Endothelial cell of umbilical vein (primary cell): ENCODE measurements at regions of chr11 and their contacts with region 1.

Region 1: DNA sequence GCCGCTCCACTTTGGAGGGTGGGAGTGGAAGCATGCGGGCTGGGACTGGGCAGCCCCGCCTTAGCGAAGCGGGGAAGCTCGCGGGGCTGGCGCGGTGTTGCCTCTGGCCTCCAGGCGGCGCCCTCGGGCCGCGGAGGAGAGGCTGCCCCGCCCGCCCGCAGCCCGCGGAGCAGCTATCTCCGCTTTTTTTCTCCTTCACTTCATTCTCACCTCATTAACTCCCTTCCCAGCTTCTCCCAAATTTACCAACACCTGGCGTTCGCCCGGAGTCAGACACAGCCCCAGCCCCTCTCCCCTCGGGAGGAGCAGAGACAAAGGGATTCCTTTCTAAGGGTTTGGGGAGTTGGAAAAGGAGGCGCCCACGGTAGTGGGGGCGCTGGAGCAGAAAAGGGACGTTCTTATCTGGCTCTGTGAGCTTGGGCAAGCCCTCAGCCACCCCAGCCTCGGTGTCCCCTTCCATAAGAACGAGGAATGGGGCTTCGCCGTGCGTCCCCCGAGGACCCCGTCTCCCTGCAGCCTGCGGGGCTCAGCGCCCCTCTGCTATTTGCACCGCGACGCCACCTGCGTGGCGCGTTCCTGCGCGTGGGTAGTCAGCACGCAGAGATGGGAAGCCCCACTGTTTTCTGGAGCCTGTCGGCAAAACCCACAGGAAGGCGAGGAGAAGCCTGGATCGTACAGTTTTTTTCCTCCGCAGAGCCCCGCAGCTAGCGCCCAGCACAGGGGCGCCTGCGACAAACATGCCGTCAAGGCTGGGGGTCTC is 1.5 kb upstream of the WNT11 start:
- DNase-seq: peak; percentile 70
- H3K4me3 ChIP-seq: peak overlapping the region in 2 of 3 experiments; percentile 21 to 41
- H3K27ac ChIP-seq: no peak overlapping the region
- H3K4me1 ChIP-seq: peaks cover 18% of the 10 kb centered on the region
- H3K27me3 ChIP-seq: peaks cover 55 to 70% of the 10 kb centered on the region in 2 experiments
- CTCF ChIP-seq: peak; percentile 93 to 97
- POLR2A ChIP-seq: no peak

Region 2: DNA sequence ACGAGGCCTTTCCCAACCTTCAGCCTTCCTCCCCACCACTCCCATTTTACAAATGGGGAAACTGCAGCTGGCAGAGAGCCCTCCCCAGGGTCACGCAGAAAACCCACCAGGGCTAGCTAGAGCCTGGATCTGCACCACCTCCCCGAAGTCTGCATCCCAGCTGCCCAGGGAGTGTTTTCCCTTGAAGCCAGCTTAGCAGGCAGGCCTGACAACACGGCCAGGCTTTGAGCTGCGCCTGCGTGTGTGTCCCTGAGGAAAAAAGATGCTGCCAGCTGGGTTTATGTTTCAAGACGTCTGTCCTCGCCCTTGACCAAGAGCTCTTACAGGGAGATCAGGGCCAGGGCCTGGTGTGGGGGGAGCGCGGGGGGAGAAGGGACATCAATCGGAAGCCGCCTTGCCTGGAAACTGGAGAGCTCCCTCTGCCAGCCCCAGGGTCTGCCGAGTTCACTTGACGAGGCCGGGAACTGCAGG is 21.9 kb before region 1 on chr11:
- CTCF ChIA-PET with region 1: interaction called, 11 read pairs
- POLR2A ChIA-PET with region 1: interaction called, 3 read pairs
- dilution Hi-C with region 1: no loop called
- intact Hi-C with region 1: no loop called
- DNase-seq: no peak
- H3K4me3 ChIP-seq: no peak overlapping the region
- H3K27ac ChIP-seq: no peak overlapping the region
- H3K4me1 ChIP-seq: no peaks in the 10 kb centered on the region
- H3K27me3 ChIP-seq: no peaks in the 10 kb centered on the region
- CTCF ChIP-seq: no peak
- POLR2A ChIP-seq: no peak

Region 3: GRCh38 chr11:76293189-76293631 is 85.4 kb after region 1 on chr11:
- CTCF ChIA-PET with region 1: interaction called, 11 read pairs
- POLR2A ChIA-PET with region 1: interaction called, 9 read pairs
- dilution Hi-C with region 1: no loop called
- intact Hi-C with region 1: no loop called
- DNase-seq: no peak
- H3K4me3 ChIP-seq: no peak overlapping the region
- H3K27ac ChIP-seq: no peak overlapping the region
- H3K4me1 ChIP-seq: peaks cover under 1% of the 10 kb centered on the region
- H3K27me3 ChIP-seq: no peaks in the 10 kb centered on the region
- CTCF ChIP-seq: no peak
- POLR2A ChIP-seq: no peak

Region 4: GRCh38 chr11:76318744-76319384 is 111.0 kb after region 1 on chr11:
- CTCF ChIA-PET with region 1: interaction called, 321 read pairs
- POLR2A ChIA-PET with region 1: no interaction called
- dilution Hi-C with region 1: no loop called
- intact Hi-C with region 1: loop called (anchors 1 kb)
- DNase-seq: peak; percentile 74
- H3K4me3 ChIP-seq: no peak overlapping the region
- H3K27ac ChIP-seq: no peak overlapping the region
- H3K4me1 ChIP-seq: no peaks in the 10 kb centered on the region
- H3K27me3 ChIP-seq: peaks cover 16 to 23% of the 10 kb centered on the region in 2 experiments
- CTCF ChIP-seq: peak; percentile 84 to 94
- POLR2A ChIP-seq: no peak

Region 5: DNA sequence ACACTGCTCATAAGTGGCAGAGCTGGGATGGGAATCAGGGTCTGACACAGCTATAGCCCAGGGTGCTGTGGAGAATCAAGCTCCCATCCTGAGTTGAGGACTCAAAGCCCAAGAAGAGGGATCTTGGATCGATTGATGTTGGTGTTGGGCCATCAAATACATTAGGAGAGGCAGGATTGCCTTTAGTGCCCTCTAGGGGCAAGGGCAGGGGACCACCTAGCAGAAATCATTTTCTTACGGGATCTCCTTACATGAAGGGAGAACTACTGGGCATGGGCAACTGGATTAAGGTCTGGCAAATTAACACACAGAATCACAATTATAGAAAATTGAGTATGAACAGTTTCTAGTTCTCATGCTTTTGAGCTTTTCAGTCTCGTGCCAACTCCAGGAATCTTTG is 212.1 kb after region 1 on chr11:
- CTCF ChIA-PET with region 1: interaction called, 3 read pairs
- POLR2A ChIA-PET with region 1: no interaction called
- dilution Hi-C with region 1: no loop called
- intact Hi-C with region 1: loop called (anchors 5 kb)
- DNase-seq: peak; percentile 7
- H3K4me3 ChIP-seq: no peak overlapping the region
- H3K27ac ChIP-seq: no peak overlapping the region
- H3K4me1 ChIP-seq: no peaks in the 10 kb centered on the region
- H3K27me3 ChIP-seq: peaks cover 9 to 19% of the 10 kb centered on the region in 2 experiments
- CTCF ChIP-seq: peak; percentile 28 to 32
- POLR2A ChIP-seq: no peak

Region 6: GRCh38 chr11:76680518-76681425 is 472.9 kb after region 1 on chr11:
- CTCF ChIA-PET with region 1: interaction called, 22 read pairs
- POLR2A ChIA-PET with region 1: no interaction called
- dilution Hi-C with region 1: no loop called
- intact Hi-C with region 1: loop called (anchors 5 kb)
- DNase-seq: peak; percentile 74
- H3K4me3 ChIP-seq: no peak overlapping the region
- H3K27ac ChIP-seq: no peak overlapping the region
- H3K4me1 ChIP-seq: no peaks in the 10 kb centered on the region
- H3K27me3 ChIP-seq: no peaks in the 10 kb centered on the region
- CTCF ChIP-seq: peak; percentile 78 to 89
- POLR2A ChIP-seq: no peak

Region 7: DNA sequence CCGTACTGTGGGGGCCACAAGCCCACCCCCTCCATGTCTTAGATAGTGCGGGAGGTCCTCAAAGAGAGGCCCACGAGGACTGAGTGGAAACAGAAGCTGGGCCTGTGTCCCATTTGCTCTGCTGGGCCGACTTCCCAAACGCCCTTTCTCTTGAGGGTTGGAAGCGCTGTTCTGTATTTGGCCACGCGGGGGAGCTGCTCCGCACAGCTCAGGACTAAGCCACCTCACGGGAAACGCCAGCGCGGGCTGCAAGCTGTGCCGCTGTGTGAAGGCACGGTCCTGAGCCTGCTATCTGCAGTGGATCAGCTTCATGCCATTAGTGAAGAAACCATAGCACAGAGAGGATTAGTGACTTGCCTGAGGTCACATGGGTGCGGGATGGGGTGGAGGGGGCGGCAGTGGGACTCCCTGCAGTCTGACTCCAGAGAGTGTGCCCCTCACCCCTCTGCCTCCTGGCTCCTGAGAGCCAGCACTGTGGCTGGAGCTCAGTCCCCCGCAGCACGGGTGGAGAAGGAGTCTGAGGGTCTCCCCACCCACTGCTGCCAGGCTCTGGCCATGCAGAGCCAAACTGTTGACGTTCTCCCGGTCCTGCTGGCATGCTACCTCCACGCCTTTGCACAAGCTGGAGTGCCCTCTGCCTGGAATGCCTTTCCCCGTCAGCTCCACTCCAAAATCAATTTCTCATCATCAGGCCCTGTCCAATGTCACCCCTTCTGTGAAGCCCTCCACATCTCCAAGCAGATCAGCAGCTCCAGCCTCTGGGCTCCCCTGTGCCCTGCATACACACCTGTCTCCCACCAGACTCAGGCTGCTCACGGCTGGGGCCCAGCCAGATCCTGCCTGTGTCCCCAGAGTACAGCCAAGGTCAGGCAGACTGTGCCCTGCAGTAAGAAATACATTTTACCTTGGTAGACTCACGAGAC is 514.2 kb after region 1 on chr11:
- CTCF ChIA-PET with region 1: interaction called, 10 read pairs
- POLR2A ChIA-PET with region 1: no interaction called
- dilution Hi-C with region 1: no loop called
- intact Hi-C with region 1: no loop called
- DNase-seq: peak; percentile 77
- H3K4me3 ChIP-seq: no peak overlapping the region
- H3K27ac ChIP-seq: no peak overlapping the region
- H3K4me1 ChIP-seq: no peaks in the 10 kb centered on the region
- H3K27me3 ChIP-seq: peaks cover 20 to 24% of the 10 kb centered on the region in 2 experiments
- CTCF ChIP-seq: peak; percentile 92 to 95
- POLR2A ChIP-seq: no peak